H1 (cell line): ENCODE measurements at regions of chr17 and their contacts with region 1.

Region 1: GRCh38 chr17:65278050-65278819 is 141.1 kb downstream of the RGS9 start:
- DNase-seq: peak in 1 of 2 experiments; percentile 78
- H3K4me3 ChIP-seq: no peak overlapping the region
- H3K27ac ChIP-seq: no peak overlapping the region
- H3K4me1 ChIP-seq: peaks cover 0 to 6% (median 0%) of the 10 kb centered on the region in 4 experiments; a peak in 2 of 7 replicates
- H3K27me3 ChIP-seq: no peaks in the 10 kb centered on the region
- CTCF ChIP-seq: peak; percentile 84 to 92 (median 88)
- EP300 ChIP-seq: no peak
- POLR2A ChIP-seq: no peak
- RAD21 ChIP-seq: peak; percentile 96 to 97

Region 2: DNA sequence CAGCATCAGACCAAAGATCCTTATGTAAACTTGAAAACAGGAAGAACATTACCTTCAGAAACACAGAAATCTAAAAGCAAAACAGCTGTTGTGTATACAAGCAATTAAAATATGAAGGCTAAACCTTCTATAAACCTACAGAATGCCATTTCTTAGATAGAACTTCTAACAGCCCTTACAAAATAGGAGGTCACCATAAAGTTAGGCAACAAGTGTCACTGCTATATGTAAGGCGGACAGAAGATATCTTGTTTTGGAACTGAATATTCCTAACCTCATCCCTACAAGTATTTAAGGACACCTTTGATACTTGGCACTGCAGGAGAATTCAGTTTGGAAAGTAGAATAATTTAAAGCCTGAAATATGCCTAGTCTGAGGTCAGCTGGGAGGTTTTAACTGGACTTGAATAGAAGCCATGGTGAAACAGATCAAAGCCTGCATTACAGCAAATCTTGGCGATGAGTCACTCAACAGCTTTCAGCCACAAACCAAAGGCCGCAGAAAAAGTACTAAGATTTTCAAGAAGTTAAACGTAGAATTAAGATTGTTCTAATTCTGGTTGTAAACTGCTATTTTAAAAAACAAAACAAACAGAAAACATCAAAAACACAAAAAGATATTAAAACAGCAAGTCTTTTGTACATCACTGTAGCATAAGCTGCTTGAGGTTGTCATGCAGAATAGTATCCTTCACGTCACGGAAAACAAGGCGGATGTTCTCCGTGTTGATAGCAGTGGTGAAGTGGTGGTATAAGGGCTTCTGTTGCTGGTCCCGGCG is 264.4 kb before region 1 on chr17:
- CTCF ChIA-PET with region 1: no interaction called
- POLR2A ChIA-PET with region 1: no interaction called
- DNase-seq: no peak
- H3K4me3 ChIP-seq: no peak overlapping the region
- H3K27ac ChIP-seq: no peak overlapping the region
- H3K4me1 ChIP-seq: no peaks in the 10 kb centered on the region
- H3K27me3 ChIP-seq: no peaks in the 10 kb centered on the region
- CTCF ChIP-seq: no peak
- EP300 ChIP-seq: no peak
- POLR2A ChIP-seq: no peak
- RAD21 ChIP-seq: no peak

Region 3: GRCh38 chr17:65122836-65123756 is 155.1 kb before region 1 on chr17:
- CTCF ChIA-PET with region 1: no interaction called
- POLR2A ChIA-PET with region 1: no interaction called
- DNase-seq: peak; percentile 69 to 86
- H3K4me3 ChIP-seq: peak overlapping the region; percentile 29 to 68 (median 46)
- H3K27ac ChIP-seq: no peak overlapping the region
- H3K4me1 ChIP-seq: no peaks in the 10 kb centered on the region
- H3K27me3 ChIP-seq: no peaks in the 10 kb centered on the region
- CTCF ChIP-seq: no peak
- EP300 ChIP-seq: no peak
- POLR2A ChIP-seq: peak; percentile 76 to 91
- RAD21 ChIP-seq: no peak; a peak in 1 of 4 replicates

Region 4: DNA sequence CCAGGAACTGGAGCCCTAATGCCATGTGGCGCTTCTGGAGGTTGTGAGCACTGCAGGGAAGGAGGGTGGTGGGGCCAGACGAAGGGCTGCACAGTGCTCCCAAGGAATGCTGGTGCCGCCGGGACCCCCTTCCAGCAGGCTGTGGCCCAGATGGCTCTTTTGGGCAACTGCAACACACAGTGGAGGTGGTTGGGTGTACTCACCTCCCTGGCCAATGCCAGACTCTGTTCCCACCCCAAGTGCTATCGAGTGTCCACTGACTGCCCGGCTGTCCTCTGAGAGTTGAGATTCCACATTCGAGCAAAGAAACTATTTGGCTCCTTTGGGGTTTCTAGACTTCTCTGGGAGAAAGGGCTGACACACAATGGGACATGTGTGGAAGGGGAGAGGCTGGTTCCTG is 26.9 kb after region 1 on chr17:
- CTCF ChIA-PET with region 1: no interaction called
- POLR2A ChIA-PET with region 1: no interaction called
- DNase-seq: no peak
- H3K4me3 ChIP-seq: no peak overlapping the region
- H3K27ac ChIP-seq: no peak overlapping the region
- H3K4me1 ChIP-seq: no peaks in the 10 kb centered on the region
- H3K27me3 ChIP-seq: no peaks in the 10 kb centered on the region
- CTCF ChIP-seq: no peak
- EP300 ChIP-seq: no peak
- POLR2A ChIP-seq: no peak
- RAD21 ChIP-seq: no peak

Region 5: GRCh38 chr17:65988081-65988850 is 710.0 kb after region 1 on chr17:
- CTCF ChIA-PET with region 1: interaction called, 26 read pairs
- POLR2A ChIA-PET with region 1: no interaction called
- DNase-seq: no peak
- H3K4me3 ChIP-seq: no peak overlapping the region
- H3K27ac ChIP-seq: no peak overlapping the region
- H3K4me1 ChIP-seq: peaks cover 0 to 5% (median 0%) of the 10 kb centered on the region in 4 experiments; a peak in 1 of 7 replicates
- H3K27me3 ChIP-seq: no peaks in the 10 kb centered on the region
- CTCF ChIP-seq: peak in 2 of 3 experiments; percentile 73 to 79; a peak in 3 of 4 replicates
- EP300 ChIP-seq: no peak
- POLR2A ChIP-seq: no peak
- RAD21 ChIP-seq: peak; percentile 98 to 99